A673 (cell line): ENCODE measurements at regions of chr9 and their contacts with region 1.

Region 1: DNA sequence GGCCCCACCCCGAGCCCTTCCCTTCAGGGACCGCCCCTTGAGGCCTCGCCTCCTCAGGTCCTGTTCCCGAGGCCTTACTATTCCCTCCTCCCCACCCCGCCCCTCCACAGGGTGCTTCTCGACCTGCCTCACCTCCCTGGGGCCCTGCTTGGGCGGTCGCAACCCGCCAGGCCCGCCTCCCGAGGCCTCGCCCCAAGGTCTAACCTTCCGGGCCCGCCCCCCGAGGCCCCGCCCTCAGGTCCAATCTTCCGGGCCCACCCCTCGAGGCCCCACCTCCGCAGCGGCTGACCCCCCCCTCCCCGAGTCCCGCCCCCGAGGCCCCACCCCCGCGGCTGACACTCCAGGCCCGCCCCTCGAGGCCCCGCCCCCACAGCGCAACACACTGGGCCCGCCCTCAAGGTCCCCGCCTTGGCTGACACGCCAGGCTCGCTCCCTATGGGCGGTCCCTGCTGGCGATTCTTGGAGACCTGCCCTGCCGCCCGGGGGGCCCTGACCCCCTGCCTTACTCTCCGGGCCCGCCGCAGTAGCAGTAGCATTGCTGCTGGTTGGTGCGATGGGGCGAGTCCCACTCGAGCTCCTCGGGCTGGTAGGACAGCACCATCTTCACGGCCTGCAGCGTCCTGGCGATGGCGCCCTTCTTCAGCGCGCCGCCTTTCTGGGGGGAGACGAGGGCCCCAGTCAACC is 8.2 kb downstream of the PHF19 start:
- DNase-seq: peak; percentile 96
- H3K4me3 ChIP-seq: peak overlapping the region; percentile 55
- H3K27ac ChIP-seq: peak overlapping the region; percentile 77
- H3K4me1 ChIP-seq: peaks cover 12% of the 10 kb centered on the region
- H3K27me3 ChIP-seq: no peaks in the 10 kb centered on the region
- CTCF ChIP-seq: peak; percentile 72

Region 2: DNA sequence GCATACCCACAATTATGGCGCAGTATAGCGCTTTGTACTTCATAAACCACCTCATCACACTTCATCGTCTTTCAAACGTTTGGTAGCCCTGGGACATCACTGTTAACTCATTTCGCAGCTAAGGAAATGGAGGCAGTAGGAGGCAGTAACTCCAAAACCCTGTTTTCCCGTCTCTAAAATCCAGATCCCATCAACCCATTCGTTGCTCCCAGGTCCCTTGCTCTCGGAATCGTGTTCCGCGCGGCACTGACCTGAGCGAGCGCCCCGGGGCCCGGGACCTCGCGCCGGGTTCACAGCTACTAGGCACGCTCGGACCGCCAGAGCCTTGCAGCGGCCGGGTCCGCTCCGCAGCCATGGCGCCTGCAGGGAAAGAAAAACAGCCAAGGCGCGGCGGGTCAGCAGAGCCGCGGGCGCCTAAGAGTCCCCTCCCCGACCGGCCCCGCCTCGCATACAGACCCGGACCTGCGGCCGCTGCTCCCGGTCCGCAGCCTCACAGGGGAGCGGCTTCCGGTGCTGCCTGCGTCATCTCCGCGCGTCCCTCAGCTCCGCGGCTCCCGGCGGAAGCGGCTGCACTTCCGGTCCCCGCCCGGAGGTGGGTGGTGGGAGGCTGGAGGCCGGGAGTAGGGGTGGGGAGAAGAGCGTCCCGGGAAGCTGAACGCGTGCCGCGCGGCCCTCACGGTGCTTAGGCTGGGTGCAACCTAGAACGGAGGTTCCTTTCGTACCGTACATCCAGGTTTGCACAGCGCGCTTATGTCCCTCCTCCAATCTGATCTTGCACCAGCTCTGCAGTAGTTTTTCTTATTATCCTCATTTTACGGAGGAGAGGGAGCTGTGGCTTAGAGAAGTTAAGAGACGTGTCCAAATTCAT is 75.7 kb before region 1 on chr9 and contains the start of gene FBXW2:
- CTCF ChIA-PET with region 1: no interaction called
- POLR2A ChIA-PET with region 1: no interaction called
- intact Hi-C with region 1: loop called (anchors 2 kb)
- DNase-seq: peak; percentile 96
- H3K4me3 ChIP-seq: peak within 1 kb of the TSS; percentile 84
- H3K27ac ChIP-seq: peak within 1 kb of the TSS; percentile 86
- H3K4me1 ChIP-seq: peaks cover 5% of the 10 kb centered on the region
- H3K27me3 ChIP-seq: no peaks in the 10 kb centered on the region
- CTCF ChIP-seq: no peak
- total RNA-seq, gene FBXW2: 63.9 and 68.5 TPM in 2 replicates

Region 3: GRCh38 chr9:120882935-120883607 is 14.3 kb after region 1 on chr9:
- CTCF ChIA-PET with region 1: no interaction called
- POLR2A ChIA-PET with region 1: no interaction called
- intact Hi-C with region 1: no loop called
- DNase-seq: no peak
- H3K4me3 ChIP-seq: no peak overlapping the region
- H3K27ac ChIP-seq: no peak overlapping the region
- H3K4me1 ChIP-seq: peaks cover 8% of the 10 kb centered on the region
- H3K27me3 ChIP-seq: no peaks in the 10 kb centered on the region
- CTCF ChIP-seq: no peak